IMR-90 (cell line): ENCODE measurements at regions of chr18 and their contacts with region 1.

Region 1: GRCh38 chr18:74190086-74190485 is 41.8 kb downstream of the TIMM21 start:
- DNase-seq: peak; percentile 76
- ATAC-seq: peak; percentile 90
- H3K4me3 ChIP-seq: no peak overlapping the region
- H3K27ac ChIP-seq: peak overlapping the region; percentile 95; the same call in 1 of the 2 replicates
- H3K4me1 ChIP-seq: peaks cover 11% of the 10 kb centered on the region
- H3K27me3 ChIP-seq: peaks cover under 1% of the 10 kb centered on the region; the same call in 1 of the 2 replicates
- CTCF ChIP-seq: no peak
- POLR2A ChIP-seq: no peak
- RAD21 ChIP-seq: no peak

Region 2: DNA sequence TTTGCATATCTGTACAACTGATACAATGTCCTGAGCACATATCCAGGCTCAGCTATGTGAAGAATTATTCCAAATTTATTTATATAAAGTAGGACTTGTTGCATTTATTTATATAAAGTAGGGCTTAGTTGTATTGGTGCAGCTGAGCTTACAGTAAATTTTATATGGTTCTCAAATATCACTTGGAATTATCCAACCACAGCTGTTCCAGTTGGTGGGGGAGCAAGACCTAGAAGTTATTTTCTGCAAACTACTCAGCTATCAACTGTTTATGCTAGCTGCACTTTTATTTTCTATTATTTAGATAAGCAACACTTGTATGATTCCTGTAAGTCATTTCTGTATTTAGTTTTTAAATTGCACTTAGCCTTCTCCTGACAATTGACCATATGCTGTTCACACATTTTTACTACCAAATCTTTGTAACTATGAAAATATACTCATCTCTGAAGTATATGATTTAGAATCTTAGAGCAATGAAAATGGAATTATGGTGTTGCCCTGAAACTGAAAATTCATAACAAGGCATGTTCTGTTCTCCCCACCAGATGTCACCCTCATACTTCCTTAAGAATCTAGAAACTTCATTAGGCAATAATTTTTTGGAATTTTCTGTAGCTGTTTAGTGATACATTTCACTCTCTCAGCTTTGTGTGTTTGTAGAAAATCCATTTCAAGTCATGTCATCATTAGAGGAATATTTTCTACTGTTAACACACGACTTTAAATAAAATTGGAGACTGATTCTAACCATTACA is 1488.9 kb before region 1 on chr18:
- CTCF ChIA-PET with region 1: no interaction called
- POLR2A ChIA-PET with region 1: no interaction called
- dilution Hi-C with region 1: no loop called
- in situ Hi-C with region 1: no loop called
- intact Hi-C with region 1: loop called (anchors 5 kb)
- DNase-seq: peak; percentile 14
- ATAC-seq: no peak
- H3K4me3 ChIP-seq: no peak overlapping the region
- H3K27ac ChIP-seq: no peak overlapping the region
- H3K4me1 ChIP-seq: no peaks in the 10 kb centered on the region
- H3K27me3 ChIP-seq: no peaks in the 10 kb centered on the region
- CTCF ChIP-seq: peak; percentile 48
- POLR2A ChIP-seq: no peak
- RAD21 ChIP-seq: peak; percentile 47

Region 3: GRCh38 chr18:73891572-73892421 is 298.3 kb before region 1 on chr18:
- CTCF ChIA-PET with region 1: no interaction called
- POLR2A ChIA-PET with region 1: no interaction called
- dilution Hi-C with region 1: no loop called
- in situ Hi-C with region 1: no loop called
- intact Hi-C with region 1: no loop called
- DNase-seq: no peak
- ATAC-seq: no peak
- H3K4me3 ChIP-seq: no peak overlapping the region
- H3K27ac ChIP-seq: no peak overlapping the region
- H3K4me1 ChIP-seq: no peaks in the 10 kb centered on the region
- H3K27me3 ChIP-seq: peaks cover 2% of the 10 kb centered on the region; the same call in 1 of the 2 replicates
- CTCF ChIP-seq: no peak
- POLR2A ChIP-seq: no peak
- RAD21 ChIP-seq: no peak

Region 4: GRCh38 chr18:74147779-74148542 is 42.1 kb before region 1 on chr18 and contains the starts of genes FBXO15 and TIMM21:
- CTCF ChIA-PET with region 1: no interaction called
- POLR2A ChIA-PET with region 1: no interaction called
- dilution Hi-C with region 1: no loop called
- in situ Hi-C with region 1: no loop called
- intact Hi-C with region 1: loop called (anchors 1 kb)
- DNase-seq: peak; percentile 96
- ATAC-seq: peak; percentile 91
- H3K4me3 ChIP-seq: peak within 1 kb of the TSS; percentile 91
- H3K27ac ChIP-seq: peak within 1 kb of the TSS; percentile 99
- H3K4me1 ChIP-seq: peaks cover 8% of the 10 kb centered on the region
- H3K27me3 ChIP-seq: no peaks in the 10 kb centered on the region
- CTCF ChIP-seq: 0 out of 2 replicates have a peak, but pooled peaks have one; percentile 0
- POLR2A ChIP-seq: peak; percentile 5; the same call in 1 of the 2 replicates
- RAD21 ChIP-seq: no peak
- total RNA-seq, gene FBXO15: 0.90 and 1.1 TPM in 2 replicates
- total RNA-seq, gene TIMM21: 41.9 and 42.8 TPM in 2 replicates

Region 5: DNA sequence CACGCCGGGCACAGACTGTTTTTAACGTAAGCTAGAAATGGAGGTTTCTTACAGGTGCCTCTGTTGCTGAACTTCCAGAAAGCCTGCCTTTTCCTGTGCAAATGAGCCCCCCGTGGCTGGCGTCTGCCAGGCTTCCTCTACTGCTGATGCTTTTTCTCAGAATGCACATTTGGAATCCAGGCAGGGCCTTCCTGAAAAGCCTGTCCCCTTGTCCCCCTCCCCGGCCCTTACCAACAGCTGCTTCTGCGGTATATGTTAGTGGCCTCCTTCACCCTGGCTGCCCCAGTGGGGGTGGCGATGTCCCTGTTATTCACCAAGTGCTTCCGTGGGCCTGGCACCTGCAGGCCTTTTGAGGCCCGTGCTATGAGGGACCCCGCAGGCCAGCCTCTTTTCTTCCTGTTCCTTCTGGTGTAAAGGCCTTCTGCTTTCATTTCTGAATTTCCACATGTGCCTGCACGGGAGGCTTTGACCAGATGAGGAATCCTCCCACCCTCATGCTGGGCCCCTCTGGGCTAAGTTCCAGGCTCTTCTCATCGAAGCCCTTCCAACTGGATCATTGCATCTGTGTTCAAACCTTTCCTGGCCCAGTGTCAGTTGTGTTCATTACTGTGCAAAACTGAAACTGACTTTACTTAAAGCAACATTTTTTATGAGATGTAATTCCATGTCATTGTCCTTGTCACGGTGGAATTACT is 316.5 kb after region 1 on chr18:
- CTCF ChIA-PET with region 1: no interaction called
- POLR2A ChIA-PET with region 1: no interaction called
- dilution Hi-C with region 1: no loop called
- in situ Hi-C with region 1: no loop called
- intact Hi-C with region 1: no loop called
- DNase-seq: peak; percentile 36
- ATAC-seq: no peak
- H3K4me3 ChIP-seq: no peak overlapping the region
- H3K27ac ChIP-seq: no peak overlapping the region
- H3K4me1 ChIP-seq: no peaks in the 10 kb centered on the region
- H3K27me3 ChIP-seq: no peaks in the 10 kb centered on the region
- CTCF ChIP-seq: no peak
- POLR2A ChIP-seq: no peak
- RAD21 ChIP-seq: no peak

Region 6: DNA sequence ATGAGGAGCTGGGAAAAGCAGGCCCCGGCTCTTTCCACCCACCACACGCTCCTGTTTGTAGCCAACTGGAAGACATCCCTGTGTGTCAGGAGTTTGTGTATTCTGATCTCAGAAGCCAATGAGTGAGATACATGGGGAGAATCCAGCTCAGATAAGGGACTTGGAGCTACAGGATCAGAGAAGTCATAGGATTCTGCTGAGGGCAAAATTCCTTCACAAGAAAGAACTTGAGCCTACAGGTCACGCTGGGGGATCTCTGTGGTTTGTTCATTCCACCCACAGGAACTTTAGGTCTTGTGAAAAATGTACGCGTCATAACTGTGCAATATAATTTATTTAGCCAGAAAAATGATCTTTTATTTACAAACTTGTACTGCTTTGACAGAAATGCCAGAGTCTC is 1317.5 kb after region 1 on chr18:
- CTCF ChIA-PET with region 1: no interaction called
- POLR2A ChIA-PET with region 1: no interaction called
- dilution Hi-C with region 1: no loop called
- in situ Hi-C with region 1: no loop called
- intact Hi-C with region 1: no loop called
- DNase-seq: peak; percentile 51
- ATAC-seq: peak; percentile 64; the same call in 1 of the 2 replicates
- H3K4me3 ChIP-seq: no peak overlapping the region
- H3K27ac ChIP-seq: no peak overlapping the region
- H3K4me1 ChIP-seq: peaks cover 5% of the 10 kb centered on the region
- H3K27me3 ChIP-seq: no peaks in the 10 kb centered on the region
- CTCF ChIP-seq: no peak
- POLR2A ChIP-seq: no peak
- RAD21 ChIP-seq: no peak